Activated naive CD4-positive, alpha-beta T cell treated with anti-CD3 and anti-CD28 coated beads, Interleukin-2, amount 10 ng/mL, durations not matched to agents 7 days and 5 days (primary cell): ENCODE measurements at regions of chr9 and their contacts with region 1.

Region 1: DNA sequence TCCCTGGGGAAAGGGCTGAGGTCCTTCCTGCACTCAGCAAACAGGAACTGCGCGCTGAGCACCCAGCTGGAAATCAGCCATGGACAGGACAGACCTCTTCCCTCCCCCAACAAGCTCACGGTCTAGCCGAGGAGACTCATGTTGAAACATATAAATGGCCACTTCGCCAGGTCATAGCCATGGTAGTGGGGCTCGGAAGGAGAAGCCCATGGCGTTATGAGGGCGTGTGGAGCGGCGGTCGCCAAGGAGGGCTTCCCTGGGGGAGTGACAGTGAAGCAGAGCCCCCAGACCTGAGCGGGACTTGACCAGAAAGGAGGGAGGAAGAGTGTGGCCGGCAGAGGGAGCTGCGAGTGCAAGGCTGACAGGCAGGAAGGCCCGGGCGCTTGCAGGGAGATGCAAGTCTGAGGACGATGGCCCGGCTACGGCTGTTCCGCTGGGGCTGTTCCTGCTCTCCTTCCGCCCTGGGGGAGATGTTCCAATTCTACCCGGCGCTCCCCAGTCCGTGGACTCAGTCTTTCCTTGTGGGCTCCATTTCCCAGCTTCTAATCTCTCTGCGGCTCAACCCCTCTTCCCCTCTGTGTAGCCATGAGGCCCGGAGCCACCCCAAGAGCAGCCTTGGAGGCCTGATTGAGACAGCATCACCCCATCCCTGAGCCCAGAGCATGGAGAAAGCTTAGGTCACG is 43.9 kb upstream of the PRRC2B start:
- DNase-seq: peak; percentile 93
- H3K4me3 Mint-ChIP-seq: no peak overlapping the region
- H3K27ac Mint-ChIP-seq: peak overlapping the region; percentile 62
- H3K4me1 Mint-ChIP-seq: peaks cover 12% of the 10 kb centered on the region
- H3K27me3 Mint-ChIP-seq: peaks cover 19% of the 10 kb centered on the region

Region 2: DNA sequence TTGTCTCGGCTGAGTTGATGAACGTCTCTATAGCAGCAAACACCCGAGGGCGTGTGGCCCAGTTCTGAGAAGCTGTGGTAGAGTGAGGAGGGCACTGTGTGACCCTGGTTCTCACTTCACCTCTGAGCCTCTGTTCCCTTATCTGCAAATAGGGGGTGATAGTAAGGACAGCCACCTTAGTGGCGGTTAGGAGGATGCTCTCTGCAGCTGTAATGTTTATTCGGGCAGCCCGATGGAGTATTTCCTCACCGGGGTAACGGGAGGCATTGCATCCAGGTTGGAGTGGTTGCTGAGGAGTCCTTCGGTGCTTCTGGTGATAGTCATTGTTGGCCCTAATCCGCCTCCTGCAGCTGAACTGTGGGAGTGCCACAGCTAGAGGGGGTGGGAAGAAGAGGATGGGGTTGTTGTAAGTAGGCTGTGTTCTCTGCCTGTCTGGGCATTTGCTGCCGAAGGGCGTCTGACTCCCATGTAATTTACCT is 57.7 kb after region 1 on chr9:
- CTCF ChIA-PET with region 1: interaction called, 24 read pairs
- DNase-seq: peak; percentile 70
- H3K4me3 Mint-ChIP-seq: peak overlapping the region; percentile 63
- H3K27ac Mint-ChIP-seq: peak overlapping the region; percentile 89
- H3K4me1 Mint-ChIP-seq: peaks cover 92% of the 10 kb centered on the region
- H3K27me3 Mint-ChIP-seq: no peaks in the 10 kb centered on the region

Region 3: GRCh38 chr9:131478421-131478868 is 128.4 kb after region 1 on chr9:
- CTCF ChIA-PET with region 1: interaction called, 19 read pairs
- DNase-seq: peak; percentile 71
- H3K4me3 Mint-ChIP-seq: no peak overlapping the region
- H3K27ac Mint-ChIP-seq: no peak overlapping the region
- H3K4me1 Mint-ChIP-seq: peaks cover 3% of the 10 kb centered on the region
- H3K27me3 Mint-ChIP-seq: no peaks in the 10 kb centered on the region

Region 4: GRCh38 chr9:131500939-131501541 is 151.0 kb after region 1 on chr9:
- CTCF ChIA-PET with region 1: interaction called, 10 read pairs
- DNase-seq: peak; percentile 59
- H3K4me3 Mint-ChIP-seq: peak overlapping the region; percentile 68
- H3K27ac Mint-ChIP-seq: peak overlapping the region; percentile 86
- H3K4me1 Mint-ChIP-seq: peaks cover 71% of the 10 kb centered on the region
- H3K27me3 Mint-ChIP-seq: no peaks in the 10 kb centered on the region